Activated naive CD4-positive, alpha-beta T cell treated with anti-CD3 and anti-CD28 coated beads for 36 hours (primary cell): ENCODE measurements at regions of chr18 and their contacts with region 1.

Region 1: GRCh38 chr18:77147418-77147852 is 14.9 kb upstream of the MBP start:
- DNase-seq: peak; percentile 52
- H3K4me3 Mint-ChIP-seq: peak overlapping the region; percentile 2
- H3K27ac Mint-ChIP-seq: peak overlapping the region; percentile 84
- H3K4me1 Mint-ChIP-seq: peaks cover 40% of the 10 kb centered on the region
- H3K27me3 Mint-ChIP-seq: no peaks in the 10 kb centered on the region

Region 2: DNA sequence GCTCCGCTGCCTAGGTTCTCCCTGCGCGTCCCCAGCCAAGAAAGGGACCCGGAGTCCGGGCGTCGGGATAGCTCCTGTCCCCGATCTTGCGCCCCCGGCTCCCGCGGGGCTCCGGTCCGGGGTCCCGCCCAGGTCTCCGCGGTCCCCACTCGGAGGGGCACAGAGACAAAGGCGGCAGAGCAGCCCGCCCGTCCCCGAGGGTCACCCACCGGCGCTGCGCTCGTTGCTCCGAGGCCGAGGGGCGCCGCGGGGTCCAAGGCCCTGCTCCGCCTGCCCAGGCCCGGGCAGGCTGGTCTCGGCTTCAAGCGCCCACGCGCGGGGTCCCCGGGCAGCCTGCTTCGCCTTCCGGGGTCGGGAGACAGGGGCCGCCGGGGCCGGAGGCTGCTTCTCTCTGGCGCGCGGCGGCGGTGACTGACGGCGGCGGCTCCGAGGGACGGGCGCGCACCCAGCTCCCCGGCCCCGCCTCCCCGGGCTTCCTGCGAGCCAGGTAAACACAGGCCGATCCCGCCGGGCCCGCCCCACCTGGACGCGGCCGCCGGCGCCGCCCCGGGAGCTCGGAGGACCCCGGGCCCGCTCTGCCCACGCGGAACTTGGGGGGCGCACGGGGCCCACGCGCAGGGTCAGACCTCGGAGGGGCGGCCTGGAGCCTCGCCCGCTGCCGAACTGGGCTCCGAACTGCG is 14.9 kb before region 1 on chr18 and contains the start of gene MBP:
- CTCF ChIA-PET with region 1: interaction called, 13 read pairs
- intact Hi-C with region 1: no loop called
- DNase-seq: peak; percentile 78
- H3K4me3 Mint-ChIP-seq: peak within 1 kb of the TSS; percentile 90
- H3K27ac Mint-ChIP-seq: peak within 1 kb of the TSS; percentile 93
- H3K4me1 Mint-ChIP-seq: peaks cover 53% of the 10 kb centered on the region
- H3K27me3 Mint-ChIP-seq: no peaks in the 10 kb centered on the region
- total RNA-seq, gene MBP: 35.9 to 36.6 TPM

Region 3: DNA sequence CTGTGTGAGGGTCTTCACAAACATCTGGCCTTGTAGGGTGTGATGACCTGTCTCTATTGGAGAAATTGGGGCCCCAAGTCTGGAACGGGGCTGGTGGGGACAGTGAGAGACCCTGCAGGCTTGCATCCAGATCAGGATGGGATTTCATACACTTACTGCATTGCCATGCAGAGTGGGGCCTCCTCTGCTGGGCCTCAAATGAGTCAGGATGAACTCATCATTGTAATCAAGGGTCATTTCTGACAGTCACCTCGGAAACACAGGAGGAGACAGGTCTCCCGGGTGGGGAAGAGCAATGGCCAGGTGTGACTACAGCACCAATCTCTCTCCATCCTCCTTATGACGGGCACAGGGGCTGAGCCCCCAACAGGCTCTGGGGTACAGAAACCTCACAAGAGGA is 54.1 kb after region 1 on chr18:
- CTCF ChIA-PET with region 1: no interaction called
- intact Hi-C with region 1: loop called (anchors 2 kb)
- DNase-seq: no peak
- H3K4me3 Mint-ChIP-seq: no peak overlapping the region
- H3K27ac Mint-ChIP-seq: no peak overlapping the region
- H3K4me1 Mint-ChIP-seq: peaks cover 16% of the 10 kb centered on the region
- H3K27me3 Mint-ChIP-seq: no peaks in the 10 kb centered on the region